ENCODE measurements at regions of chr22 and their contacts with region 1.

Region 1: DNA sequence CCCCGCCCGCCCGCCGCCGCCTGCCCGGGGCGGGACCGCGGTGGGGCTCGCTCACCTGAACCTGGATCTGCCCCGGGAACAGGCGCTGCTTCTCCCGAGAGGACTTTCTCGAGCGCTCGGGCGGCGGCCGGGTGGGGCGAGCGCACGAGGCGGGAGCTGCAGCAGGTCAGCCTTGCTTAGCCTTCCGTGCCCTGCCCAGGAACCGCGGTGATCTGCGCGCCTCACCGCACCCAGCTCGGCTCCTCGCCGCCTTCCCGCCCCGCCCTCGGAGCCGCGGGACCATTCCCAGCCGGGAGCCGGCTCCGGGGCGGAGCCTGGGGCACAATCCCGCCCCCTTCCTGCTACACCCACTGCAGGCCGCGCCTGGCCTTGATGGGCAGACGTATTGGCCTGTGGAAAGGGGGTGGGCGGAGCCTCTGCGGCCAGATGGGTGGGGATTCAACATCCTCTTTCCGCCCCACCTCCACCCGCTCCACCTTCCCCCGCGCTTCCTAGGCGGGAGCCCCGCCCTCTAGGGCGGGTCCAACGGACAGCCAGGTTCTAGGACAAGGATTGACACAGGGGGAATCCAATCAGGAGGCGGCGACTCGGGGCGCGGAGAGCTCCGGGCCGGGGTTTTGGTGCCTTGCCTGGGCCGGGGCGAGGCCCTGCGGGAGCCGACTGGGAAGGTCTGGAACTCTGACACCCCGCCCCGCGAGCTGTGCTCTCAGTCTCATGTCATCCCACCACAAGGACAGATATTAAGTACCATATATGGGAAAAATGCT is at the start of gene MYH9:
- DNase-seq: peak; percentile 96 to 100 (median 98)
- ATAC-seq: peak; percentile 73
- H3K4me3 ChIP-seq: peak within 1 kb of the TSS; percentile 98
- H3K4me3 Mint-ChIP-seq: peak within 1 kb of the TSS; percentile 96
- H3K27ac ChIP-seq: peak within 1 kb of the TSS; percentile 78 to 91
- H3K27ac Mint-ChIP-seq: peak within 1 kb of the TSS; percentile 93
- H3K4me1 ChIP-seq: peaks cover 36% of the 10 kb centered on the region
- H3K4me1 Mint-ChIP-seq: peaks cover 49% of the 10 kb centered on the region
- H3K27me3 ChIP-seq: no peaks in the 10 kb centered on the region
- H3K27me3 Mint-ChIP-seq: no peaks in the 10 kb centered on the region
- CTCF ChIP-seq: no peak
- total RNA-seq, gene MYH9: 901 to 925 TPM

Region 2: DNA sequence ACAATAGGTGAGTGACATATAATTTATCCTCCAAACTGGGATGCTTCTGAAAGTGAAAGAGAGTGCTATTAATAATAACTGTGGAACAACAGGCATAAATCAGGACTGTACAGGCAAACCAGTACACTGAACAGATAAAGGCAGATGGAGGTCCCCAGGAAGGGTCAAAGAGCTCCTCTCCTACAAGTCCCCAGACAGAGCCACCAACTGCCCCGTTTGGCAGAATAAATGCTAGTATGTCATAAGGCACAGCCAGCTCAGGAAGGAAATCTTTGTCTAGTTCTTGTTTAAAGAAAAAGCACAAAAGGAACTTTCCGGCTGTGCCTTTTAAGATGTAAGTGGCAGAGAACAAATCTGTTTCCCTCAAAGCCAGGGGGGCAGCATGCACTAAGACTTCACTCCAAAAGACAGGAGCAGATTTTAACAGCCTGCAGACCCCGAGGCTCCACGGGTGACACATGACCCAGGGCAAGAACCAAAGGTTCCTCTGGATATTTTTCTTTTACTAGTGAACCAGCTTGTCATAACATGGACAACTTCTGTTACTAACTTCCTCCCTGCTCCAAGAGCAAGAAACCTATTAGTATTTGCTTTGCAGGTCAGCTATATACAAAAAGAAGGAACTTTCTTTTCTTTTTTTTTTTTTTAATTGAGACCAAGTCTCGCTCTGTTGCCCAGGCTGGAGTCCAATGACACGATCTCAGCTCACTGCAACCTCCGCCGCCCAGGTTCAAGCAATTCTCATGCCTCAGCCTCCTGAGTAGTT is 50.4 kb before region 1 on chr22:
- CTCF ChIA-PET with region 1: interaction called, 5 read pairs
- POLR2A ChIA-PET with region 1: interaction called, 1,847 read pairs
- intact Hi-C with region 1: loop called (anchors 1 to 2 kb)
- DNase-seq: peak in 4 of 14 experiments; percentile 32 to 52 (median 47)
- ATAC-seq: no peak
- H3K4me3 ChIP-seq: no peak overlapping the region
- H3K4me3 Mint-ChIP-seq: peak overlapping the region; percentile 68
- H3K27ac ChIP-seq: peak overlapping the region; percentile 87 to 92
- H3K27ac Mint-ChIP-seq: peak overlapping the region; percentile 93
- H3K4me1 ChIP-seq: peaks cover 100% of the 10 kb centered on the region
- H3K4me1 Mint-ChIP-seq: peaks cover 91% of the 10 kb centered on the region
- H3K27me3 ChIP-seq: no peaks in the 10 kb centered on the region
- H3K27me3 Mint-ChIP-seq: no peaks in the 10 kb centered on the region
- CTCF ChIP-seq: no peak

Region 3: DNA sequence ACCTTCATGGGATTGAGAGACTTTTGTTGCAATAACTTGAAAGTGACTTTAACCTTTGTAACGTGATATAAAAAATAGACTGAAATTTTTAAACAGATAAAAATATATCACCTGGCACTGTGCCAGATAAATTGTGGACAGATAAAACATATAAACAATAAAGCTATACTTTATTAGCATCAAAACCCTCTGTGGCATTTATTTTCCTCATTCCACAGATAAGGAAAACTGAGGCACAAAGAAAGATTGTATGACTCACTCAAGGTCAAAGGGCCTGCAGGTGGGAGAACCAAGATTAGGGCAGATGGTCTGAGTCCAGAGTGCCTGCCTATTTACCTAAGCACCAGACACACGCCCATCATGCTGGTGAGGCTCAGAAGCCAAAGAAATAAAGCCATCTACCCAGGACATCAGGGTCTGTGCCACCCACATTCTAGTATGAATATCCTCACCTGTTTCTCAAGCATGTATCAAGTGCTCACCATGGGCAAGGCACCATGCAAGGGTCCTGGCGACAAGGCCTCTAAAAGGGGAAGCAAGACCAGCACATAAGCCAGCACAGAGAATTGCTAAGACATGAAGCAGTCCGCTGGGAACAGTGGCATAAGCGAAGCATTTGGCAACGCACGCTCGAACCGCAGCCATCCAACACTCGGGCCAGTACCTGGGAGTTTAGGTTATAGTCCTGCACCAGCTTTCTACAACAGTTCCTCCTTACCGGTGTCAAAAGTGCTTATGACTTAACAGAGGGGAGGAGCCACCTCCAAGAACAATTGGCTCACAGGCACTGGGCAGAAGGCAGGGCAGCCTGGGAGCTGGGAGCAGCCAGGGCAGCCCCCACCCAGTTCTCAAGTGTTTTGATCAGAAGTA is 17.8 kb before region 1 on chr22:
- CTCF ChIA-PET with region 1: interaction called, 8 read pairs
- POLR2A ChIA-PET with region 1: interaction called, 1,847 read pairs
- intact Hi-C with region 1: loop called (anchors 1 to 2 kb)
- DNase-seq: peak in 4 of 14 experiments; percentile 38 to 65 (median 62)
- ATAC-seq: peak; percentile 39
- H3K4me3 ChIP-seq: peak overlapping the region; percentile 39
- H3K4me3 Mint-ChIP-seq: peak overlapping the region; percentile 90
- H3K27ac ChIP-seq: peak overlapping the region; percentile 63 to 87
- H3K27ac Mint-ChIP-seq: peak overlapping the region; percentile 93
- H3K4me1 ChIP-seq: peaks cover 99% of the 10 kb centered on the region
- H3K4me1 Mint-ChIP-seq: peaks cover 94% of the 10 kb centered on the region
- H3K27me3 ChIP-seq: no peaks in the 10 kb centered on the region
- H3K27me3 Mint-ChIP-seq: no peaks in the 10 kb centered on the region
- CTCF ChIP-seq: no peak

Region 4: DNA sequence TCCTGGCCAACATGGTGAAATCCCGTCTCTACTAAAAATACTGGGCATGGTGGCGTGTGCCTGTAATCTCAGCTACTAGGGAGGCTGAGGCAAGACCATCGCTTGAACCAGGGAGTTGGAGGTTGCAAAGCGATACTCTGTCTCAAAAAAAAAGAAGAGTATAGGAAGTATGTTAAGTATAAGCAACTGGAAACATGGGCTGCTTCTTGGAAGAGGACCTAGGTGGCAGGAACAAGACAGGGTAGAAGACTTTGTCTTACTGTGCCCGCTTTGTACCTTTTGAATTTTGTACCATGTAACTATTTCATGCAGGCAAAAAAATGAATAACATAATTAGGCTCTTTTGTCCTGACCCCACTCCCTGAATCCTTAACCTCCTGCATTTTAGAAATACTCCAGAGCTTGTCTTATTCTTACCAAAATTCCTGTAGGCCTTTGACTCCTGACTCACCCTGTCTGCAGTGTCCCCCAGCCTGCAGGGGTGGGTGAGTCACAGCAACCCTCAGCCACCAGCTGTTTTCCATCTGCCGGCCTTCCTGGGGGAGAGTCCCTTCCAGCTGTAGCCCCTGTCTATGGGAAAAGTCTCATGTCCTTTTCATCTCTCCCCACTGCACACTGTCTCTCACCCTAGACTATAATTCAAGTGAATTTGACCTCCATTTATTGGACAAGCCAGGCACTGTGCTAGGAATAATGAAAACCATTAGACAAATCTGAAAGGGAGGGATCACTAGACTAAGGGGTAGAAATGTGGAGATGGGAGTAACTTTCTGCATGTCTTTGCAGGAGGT is 51.7 kb after region 1 on chr22:
- CTCF ChIA-PET with region 1: interaction called, 9 read pairs
- POLR2A ChIA-PET with region 1: interaction called, 10 read pairs
- intact Hi-C with region 1: loop called in 1 of 2 experiments (anchors 5 kb)
- DNase-seq: peak in 2 of 14 experiments; percentile 26 to 35
- ATAC-seq: no peak
- H3K4me3 ChIP-seq: no peak overlapping the region
- H3K4me3 Mint-ChIP-seq: no peak overlapping the region
- H3K27ac ChIP-seq: no peak overlapping the region
- H3K27ac Mint-ChIP-seq: no peak overlapping the region
- H3K4me1 ChIP-seq: peaks cover 36% of the 10 kb centered on the region
- H3K4me1 Mint-ChIP-seq: peaks cover 39% of the 10 kb centered on the region
- H3K27me3 ChIP-seq: no peaks in the 10 kb centered on the region
- H3K27me3 Mint-ChIP-seq: no peaks in the 10 kb centered on the region
- CTCF ChIP-seq: no peak

Region 5: GRCh38 chr22:36470162-36470993 is 82.4 kb after region 1 on chr22:
- CTCF ChIA-PET with region 1: interaction called, 10 read pairs
- POLR2A ChIA-PET with region 1: interaction called, 6 read pairs
- intact Hi-C with region 1: loop called (anchors 2 to 5 kb)
- DNase-seq: peak; percentile 71 to 92 (median 78)
- ATAC-seq: peak; percentile 98
- H3K4me3 ChIP-seq: no peak overlapping the region
- H3K4me3 Mint-ChIP-seq: no peak overlapping the region
- H3K27ac ChIP-seq: no peak overlapping the region
- H3K27ac Mint-ChIP-seq: peak overlapping the region; percentile 70
- H3K4me1 ChIP-seq: peaks cover 27% of the 10 kb centered on the region
- H3K4me1 Mint-ChIP-seq: peaks cover 26% of the 10 kb centered on the region
- H3K27me3 ChIP-seq: no peaks in the 10 kb centered on the region
- H3K27me3 Mint-ChIP-seq: no peaks in the 10 kb centered on the region
- CTCF ChIP-seq: peak; percentile 89

Measured in CD4-positive, alpha-beta T cell (primary cell).